A673 (cell line): ENCODE measurements at regions of chr3 and their contacts with region 1.

Region 1: GRCh38 chr3:27590437-27591298 is 106.5 kb upstream of the SLC4A7 start:
- DNase-seq: peak; percentile 80
- H3K4me3 ChIP-seq: no peak overlapping the region
- H3K27ac ChIP-seq: peak overlapping the region; percentile 57
- H3K4me1 ChIP-seq: peaks cover 28% of the 10 kb centered on the region
- H3K27me3 ChIP-seq: no peaks in the 10 kb centered on the region
- CTCF ChIP-seq: no peak

Region 2: GRCh38 chr3:27484015-27484844 is 106.4 kb before region 1 on chr3 and contains the start of gene SLC4A7:
- CTCF ChIA-PET with region 1: no interaction called
- POLR2A ChIA-PET with region 1: no interaction called
- intact Hi-C with region 1: loop called (anchors 5 kb)
- DNase-seq: peak; percentile 95
- H3K4me3 ChIP-seq: peak within 1 kb of the TSS; percentile 97
- H3K27ac ChIP-seq: peak within 1 kb of the TSS; percentile 94
- H3K4me1 ChIP-seq: peaks cover 14% of the 10 kb centered on the region
- H3K27me3 ChIP-seq: no peaks in the 10 kb centered on the region
- CTCF ChIP-seq: no peak
- total RNA-seq, gene SLC4A7: 22.6 and 26.2 TPM in 2 replicates

Region 3: DNA sequence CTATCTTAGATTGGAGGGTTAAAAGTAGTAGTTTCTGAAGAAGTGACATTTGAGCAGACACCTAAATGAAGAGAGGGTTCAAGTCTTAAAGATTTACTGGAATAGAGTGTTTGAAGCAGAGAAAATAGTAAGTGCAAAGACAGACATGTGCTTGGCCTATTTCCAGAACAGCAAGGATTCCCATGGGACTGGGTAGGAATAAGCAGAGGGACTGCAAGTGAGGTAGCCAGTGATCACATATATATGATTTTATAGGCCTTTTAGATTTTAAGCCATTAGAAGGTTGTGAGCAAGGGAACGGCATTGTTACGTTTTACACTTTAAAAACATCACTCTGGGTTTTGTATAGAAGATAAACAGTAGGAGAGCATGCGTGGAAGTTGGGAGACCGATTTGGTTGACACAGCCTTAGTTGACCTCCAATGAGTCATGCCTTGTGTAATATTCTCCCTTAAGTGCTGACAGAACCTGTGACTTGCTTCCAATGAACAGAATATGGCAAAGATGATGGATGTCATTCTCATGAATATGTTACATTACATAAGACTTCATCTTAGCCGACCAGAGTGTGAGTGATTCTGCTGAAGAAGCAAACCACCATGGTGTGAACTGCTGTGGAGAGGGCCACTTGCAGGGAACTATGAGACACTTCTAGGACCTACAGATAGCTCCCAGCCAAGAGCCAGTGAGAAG is 69.3 kb before region 1 on chr3:
- CTCF ChIA-PET with region 1: no interaction called
- POLR2A ChIA-PET with region 1: interaction called, 14 read pairs
- intact Hi-C with region 1: no loop called
- DNase-seq: no peak
- H3K4me3 ChIP-seq: no peak overlapping the region
- H3K27ac ChIP-seq: no peak overlapping the region
- H3K4me1 ChIP-seq: peaks cover 5% of the 10 kb centered on the region
- H3K27me3 ChIP-seq: no peaks in the 10 kb centered on the region
- CTCF ChIP-seq: no peak

Region 4: DNA sequence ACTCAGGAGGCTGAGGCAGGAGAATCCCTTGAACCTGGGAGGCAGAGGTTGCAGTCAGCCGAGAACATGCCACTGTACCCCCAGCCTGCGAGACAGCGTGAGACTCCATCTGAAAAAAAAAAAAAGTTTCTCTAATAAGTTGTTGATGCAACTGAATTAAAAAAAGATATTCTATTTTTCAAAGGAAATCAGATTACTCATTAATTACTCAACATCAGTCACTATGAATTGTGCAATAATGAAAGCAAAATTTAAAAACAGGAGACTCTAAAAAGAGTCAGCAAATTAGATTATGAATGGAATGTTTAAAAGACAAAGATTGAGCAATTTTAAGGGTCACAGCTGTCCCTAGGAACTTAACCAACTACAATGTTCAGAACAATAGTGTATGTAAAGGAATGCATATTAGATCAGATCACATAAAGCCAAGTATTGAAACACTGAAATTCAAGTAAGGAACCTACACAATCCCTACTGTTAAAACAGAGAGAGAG is 46.2 kb before region 1 on chr3:
- CTCF ChIA-PET with region 1: no interaction called
- POLR2A ChIA-PET with region 1: interaction called, 10 read pairs
- intact Hi-C with region 1: loop called (anchors 2 kb)
- DNase-seq: peak; percentile 65
- H3K4me3 ChIP-seq: no peak overlapping the region
- H3K27ac ChIP-seq: no peak overlapping the region
- H3K4me1 ChIP-seq: peaks cover 10% of the 10 kb centered on the region
- H3K27me3 ChIP-seq: peaks cover 3% of the 10 kb centered on the region
- CTCF ChIP-seq: no peak

Region 5: GRCh38 chr3:27570421-27571106 is 20.1 kb before region 1 on chr3:
- CTCF ChIA-PET with region 1: no interaction called
- POLR2A ChIA-PET with region 1: no interaction called
- intact Hi-C with region 1: no loop called
- DNase-seq: no peak
- H3K4me3 ChIP-seq: no peak overlapping the region
- H3K27ac ChIP-seq: no peak overlapping the region
- H3K4me1 ChIP-seq: peaks cover 3% of the 10 kb centered on the region
- H3K27me3 ChIP-seq: no peaks in the 10 kb centered on the region
- CTCF ChIP-seq: no peak

Region 6: GRCh38 chr3:28224430-28224829 is 633.8 kb after region 1 on chr3:
- CTCF ChIA-PET with region 1: no interaction called
- POLR2A ChIA-PET with region 1: no interaction called
- intact Hi-C with region 1: no loop called
- DNase-seq: no peak
- H3K4me3 ChIP-seq: no peak overlapping the region
- H3K27ac ChIP-seq: no peak overlapping the region
- H3K4me1 ChIP-seq: no peaks in the 10 kb centered on the region
- H3K27me3 ChIP-seq: no peaks in the 10 kb centered on the region
- CTCF ChIP-seq: no peak